GM12878 (cell line): ENCODE measurements at regions of chr11 and their contacts with region 1.

Region 1: GRCh38 chr11:132312701-132313111 is 942.3 kb downstream of the NTM start:
- DNase-seq: no peak
- ATAC-seq: peak; percentile 82
- H3K4me3 ChIP-seq: no peak overlapping the region
- H3K27ac ChIP-seq: no peak overlapping the region
- H3K4me1 ChIP-seq: no peaks in the 10 kb centered on the region
- H3K27me3 ChIP-seq: no peaks in the 10 kb centered on the region
- CTCF ChIP-seq: peak; percentile 52 to 68 (median 67)
- EP300 ChIP-seq: no peak
- POLR2A ChIP-seq: no peak
- RAD21 ChIP-seq: peak; percentile 50; the same call in 1 of the 2 replicates

Region 2: GRCh38 chr11:132245403-132246385 is 67.0 kb before region 1 on chr11:
- CTCF ChIA-PET with region 1: no interaction called
- POLR2A ChIA-PET with region 1: no interaction called
- RAD21 ChIA-PET with region 1: no interaction called
- SMC1A ChIA-PET with region 1: no interaction called
- in situ Hi-C with region 1: no loop called
- intact Hi-C with region 1: no loop called
- DNase-seq: no peak
- ATAC-seq: no peak
- H3K4me3 ChIP-seq: no peak overlapping the region
- H3K27ac ChIP-seq: no peak overlapping the region
- H3K4me1 ChIP-seq: no peaks in the 10 kb centered on the region
- H3K27me3 ChIP-seq: peaks cover 0 to 3% of the 10 kb centered on the region in 2 experiments; a peak in 1 of 4 replicates
- CTCF ChIP-seq: no peak
- EP300 ChIP-seq: no peak
- POLR2A ChIP-seq: no peak
- RAD21 ChIP-seq: no peak

Region 3: DNA sequence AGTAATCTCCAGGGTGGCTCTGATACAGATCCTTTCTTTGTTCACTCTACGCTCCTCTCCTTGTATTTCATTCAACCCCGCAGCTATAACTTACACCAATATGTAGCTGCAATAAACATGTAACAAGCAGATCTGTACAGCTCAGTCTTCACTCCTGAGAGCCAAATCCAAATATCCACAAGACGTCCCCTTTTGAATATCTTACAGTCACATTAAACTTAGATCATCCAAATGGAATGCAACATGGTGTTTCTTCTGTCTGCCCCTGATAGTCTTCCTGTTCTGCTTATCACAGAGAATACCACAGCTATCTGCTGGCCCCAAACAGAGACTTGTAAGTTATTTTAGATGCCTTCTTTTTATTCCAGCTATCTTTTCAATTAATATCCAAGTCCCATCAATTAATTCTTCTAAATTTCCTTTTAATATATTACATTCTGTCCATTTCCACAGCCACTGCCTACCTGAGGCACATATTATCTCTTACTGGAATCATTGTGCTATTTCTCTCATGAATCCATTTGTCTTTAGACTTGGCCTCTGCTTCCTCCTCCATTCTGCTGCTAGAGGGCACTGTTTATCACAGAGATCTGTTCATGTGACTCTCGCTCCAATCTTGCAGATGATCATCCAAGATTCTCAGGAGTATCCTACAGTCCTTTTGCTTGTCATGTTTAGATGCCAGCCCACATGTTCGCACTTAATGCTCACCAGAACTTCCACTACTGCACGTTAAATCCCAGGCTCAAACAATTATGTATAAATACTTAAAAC is 33.7 kb before region 1 on chr11:
- CTCF ChIA-PET with region 1: interaction called, 38 read pairs
- POLR2A ChIA-PET with region 1: no interaction called
- RAD21 ChIA-PET with region 1: interaction called, 3 read pairs
- SMC1A ChIA-PET with region 1: interaction called, 4 read pairs
- in situ Hi-C with region 1: no loop called
- intact Hi-C with region 1: no loop called
- DNase-seq: peak; percentile 4
- ATAC-seq: peak; percentile 90
- H3K4me3 ChIP-seq: no peak overlapping the region
- H3K27ac ChIP-seq: no peak overlapping the region
- H3K4me1 ChIP-seq: no peaks in the 10 kb centered on the region
- H3K27me3 ChIP-seq: no peaks in the 10 kb centered on the region
- CTCF ChIP-seq: peak; percentile 60 to 71 (median 64)
- EP300 ChIP-seq: no peak
- POLR2A ChIP-seq: no peak
- RAD21 ChIP-seq: peak; percentile 89

Region 4: DNA sequence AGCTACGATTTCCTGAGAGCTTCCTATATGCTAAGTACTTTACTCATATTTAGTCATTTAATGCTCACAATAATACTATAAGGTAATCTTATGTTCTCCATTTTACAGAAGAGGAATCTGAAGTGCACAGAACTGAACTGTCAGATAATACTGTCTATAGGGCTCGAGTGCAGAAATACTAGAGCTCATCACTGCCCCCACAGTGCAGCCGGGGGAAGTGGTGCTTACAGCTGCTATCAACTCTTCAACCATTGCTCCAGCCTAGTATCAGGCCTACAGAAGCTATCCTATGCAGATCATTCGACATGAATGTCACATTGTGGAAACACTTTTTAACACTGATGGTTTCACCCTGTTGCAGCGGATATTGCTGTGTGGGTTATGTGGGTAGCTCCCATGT is 12.4 kb before region 1 on chr11:
- CTCF ChIA-PET with region 1: interaction called, 54 read pairs
- POLR2A ChIA-PET with region 1: no interaction called
- RAD21 ChIA-PET with region 1: interaction called, 3 read pairs
- SMC1A ChIA-PET with region 1: interaction called, 7 read pairs
- in situ Hi-C with region 1: no loop called
- intact Hi-C with region 1: no loop called
- DNase-seq: no peak
- ATAC-seq: peak; percentile 83
- H3K4me3 ChIP-seq: no peak overlapping the region
- H3K27ac ChIP-seq: no peak overlapping the region
- H3K4me1 ChIP-seq: no peaks in the 10 kb centered on the region
- H3K27me3 ChIP-seq: no peaks in the 10 kb centered on the region
- CTCF ChIP-seq: peak; percentile 4 to 46 (median 32); a peak in 5 of 6 replicates
- EP300 ChIP-seq: no peak
- POLR2A ChIP-seq: no peak
- RAD21 ChIP-seq: no peak

Region 5: DNA sequence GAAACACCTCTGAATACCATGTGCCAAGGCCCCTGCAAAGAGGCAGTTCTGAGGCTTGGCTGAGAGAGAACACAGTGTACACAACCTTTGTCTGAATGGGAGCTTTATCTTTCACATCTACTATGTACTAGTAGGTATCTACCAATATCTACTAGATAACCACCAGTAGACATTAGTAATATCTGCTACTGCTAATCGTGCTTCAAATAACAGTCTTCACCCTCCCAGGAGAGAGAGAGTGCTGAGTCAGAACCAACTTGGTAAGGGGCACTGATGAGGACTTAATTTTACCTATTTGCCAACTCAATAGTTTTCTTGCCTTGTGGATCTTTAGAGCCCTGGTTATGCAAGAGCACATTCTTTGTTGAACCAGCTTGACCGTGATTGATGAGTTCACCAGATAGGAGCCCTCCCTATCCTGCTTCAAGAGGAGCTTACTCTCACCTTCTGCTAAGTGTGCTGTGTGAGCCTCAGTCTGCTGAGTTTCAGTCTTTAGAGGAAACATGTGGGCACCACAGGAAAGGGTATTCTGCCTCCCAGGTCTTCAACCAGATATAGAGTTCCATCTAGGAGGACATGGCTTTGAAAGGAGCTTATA is 25.2 kb after region 1 on chr11:
- CTCF ChIA-PET with region 1: interaction called, 18 read pairs
- POLR2A ChIA-PET with region 1: no interaction called
- RAD21 ChIA-PET with region 1: no interaction called
- SMC1A ChIA-PET with region 1: interaction called, 4 read pairs
- in situ Hi-C with region 1: no loop called
- intact Hi-C with region 1: no loop called
- DNase-seq: no peak
- ATAC-seq: peak; percentile 61
- H3K4me3 ChIP-seq: no peak overlapping the region
- H3K27ac ChIP-seq: no peak overlapping the region
- H3K4me1 ChIP-seq: peaks cover 16% of the 10 kb centered on the region
- H3K27me3 ChIP-seq: no peaks in the 10 kb centered on the region
- CTCF ChIP-seq: no peak
- EP300 ChIP-seq: no peak
- POLR2A ChIP-seq: no peak
- RAD21 ChIP-seq: no peak

Region 6: DNA sequence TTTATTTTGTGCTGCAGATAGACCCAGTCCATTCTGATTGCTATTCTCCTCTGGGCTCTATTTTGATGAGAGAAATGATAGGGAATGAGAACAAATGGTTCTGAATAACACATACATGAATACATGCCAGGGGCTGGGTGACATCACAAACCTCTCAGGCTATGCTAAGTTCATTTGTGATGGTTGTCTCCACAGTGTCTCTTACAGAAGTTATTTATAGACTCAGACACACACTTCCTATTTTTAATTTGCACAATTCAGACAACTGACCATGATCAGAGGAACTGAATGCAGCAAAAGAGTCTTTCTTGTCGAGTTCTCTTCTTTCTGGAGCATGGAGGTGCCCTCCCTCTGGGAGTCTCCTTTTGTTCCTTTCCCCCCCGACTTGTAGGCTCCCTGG is 227.9 kb after region 1 on chr11:
- CTCF ChIA-PET with region 1: no interaction called
- POLR2A ChIA-PET with region 1: no interaction called
- RAD21 ChIA-PET with region 1: no interaction called
- SMC1A ChIA-PET with region 1: no interaction called
- in situ Hi-C with region 1: no loop called
- intact Hi-C with region 1: no loop called
- DNase-seq: no peak
- ATAC-seq: no peak
- H3K4me3 ChIP-seq: no peak overlapping the region
- H3K27ac ChIP-seq: no peak overlapping the region
- H3K4me1 ChIP-seq: no peaks in the 10 kb centered on the region; the same call in 1 of the 2 replicates
- H3K27me3 ChIP-seq: no peaks in the 10 kb centered on the region
- CTCF ChIP-seq: no peak
- EP300 ChIP-seq: no peak
- POLR2A ChIP-seq: no peak
- RAD21 ChIP-seq: no peak